Dorsolateral prefrontal cortex (tissue), 120 donors: ENCODE measurements at regions of chr10 and their contacts with region 1.

Region 1: DNA sequence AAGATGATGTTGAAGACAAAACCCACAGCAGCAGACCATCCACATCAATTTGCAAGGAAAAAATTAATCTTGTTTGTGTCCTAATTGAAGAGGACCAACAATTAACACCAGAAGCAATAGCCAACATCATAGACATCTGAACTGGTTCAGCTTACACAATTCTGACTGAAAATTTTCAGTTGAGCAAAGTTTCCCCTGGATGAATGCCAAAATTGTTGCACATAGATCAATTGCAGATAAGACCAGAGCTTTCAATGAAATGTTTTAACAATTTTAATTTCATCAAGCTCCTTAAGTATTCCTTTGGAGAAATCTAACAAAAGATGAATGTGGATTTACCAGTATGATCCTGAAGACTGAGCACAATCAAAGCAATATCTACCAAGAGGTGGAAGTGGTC is 168.6 kb downstream of the CTNNA3 start:
- DNase-seq: no peak
- H3K4me3 ChIP-seq: no peak overlapping the region
- H3K27ac ChIP-seq: peak overlapping the region in 2 of 59 donors; percentile 10 to 62
- H3K27me3 ChIP-seq: no peaks in the 10 kb centered on the region
- CTCF ChIP-seq: no peak

Region 2: DNA sequence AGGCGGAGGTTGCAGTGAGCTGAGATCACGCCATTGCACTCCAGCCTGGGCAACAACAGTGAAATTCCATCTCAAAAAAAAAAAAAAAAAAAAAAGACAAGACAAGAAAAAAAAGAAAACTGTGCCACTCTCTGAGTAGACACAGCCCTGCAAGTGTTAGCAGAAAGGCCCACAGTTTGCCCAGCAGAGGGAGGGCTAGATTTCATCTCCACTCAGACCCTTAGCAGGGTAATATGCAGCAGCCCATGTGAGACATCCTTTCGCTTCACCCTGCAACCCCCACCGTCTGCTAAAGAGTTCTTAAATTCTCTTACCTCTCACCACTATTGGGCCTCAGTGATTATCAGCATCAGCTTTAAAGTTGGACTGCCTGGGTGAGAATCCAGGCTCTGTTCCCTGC is 130.4 kb after region 1 on chr10:
- intact Hi-C with region 1: loop called in 1 of 2 experiments (anchors 5 kb)
- DNase-seq: peak in 7 of 10 donors; percentile 24 to 64 (median 50)
- H3K4me3 ChIP-seq: peak overlapping the region in 5 of 59 donors; percentile 1 to 38 (median 17)
- H3K27ac ChIP-seq: peak overlapping the region in 11 of 59 donors; percentile 4 to 63 (median 42)
- H3K27me3 ChIP-seq: no peaks in the 10 kb centered on the region
- CTCF ChIP-seq: peak in 41 of 56 donors; percentile 10 to 60 (median 33)